Activated CD4-positive, alpha-beta memory T cell treated with anti-CD3 and anti-CD28 coated beads for 36 hours (primary cell): ENCODE measurements at regions of chr7 and their contacts with region 1.

Region 1: DNA sequence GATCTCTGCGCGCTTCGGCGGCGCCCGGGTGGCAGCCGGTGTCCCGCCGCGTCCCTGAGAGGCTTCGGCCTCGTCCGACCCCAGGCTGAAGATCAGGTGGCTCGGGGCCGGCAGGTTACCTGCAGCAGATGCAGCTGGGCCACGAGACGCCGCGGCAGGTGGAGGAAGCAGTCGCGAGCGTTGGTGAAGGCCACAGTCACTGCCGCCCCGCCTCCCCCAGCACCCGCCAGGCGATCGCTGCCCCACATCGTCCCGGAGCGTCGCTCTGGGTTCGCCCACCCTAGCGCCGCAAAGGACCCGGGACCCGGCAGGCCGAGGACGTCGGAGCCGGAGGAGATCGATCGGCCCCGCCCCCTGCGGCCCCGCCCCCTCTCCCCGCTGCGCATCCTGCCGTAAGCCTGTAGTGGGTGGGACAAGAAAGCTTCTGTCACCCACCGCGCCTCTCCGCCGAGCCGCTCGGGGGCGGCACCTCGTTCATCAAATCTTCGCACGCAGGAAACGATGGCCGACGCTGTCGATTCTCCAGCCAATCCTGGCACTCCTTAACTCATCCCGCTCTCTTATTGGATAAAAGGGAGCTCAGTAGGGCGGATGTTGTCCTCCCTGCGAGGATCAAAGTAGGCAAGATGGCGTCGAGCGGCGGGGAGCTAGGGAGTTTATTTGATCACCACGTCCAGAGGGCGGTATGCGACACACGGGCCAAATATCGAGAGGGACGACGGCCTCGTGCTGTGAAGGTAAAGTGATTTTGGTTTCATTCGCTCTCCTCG is at the starts of genes PEX1 and RBM48:
- DNase-seq: peak; percentile 98
- H3K4me3 Mint-ChIP-seq: peak within 1 kb of the TSS; percentile 90
- H3K27ac Mint-ChIP-seq: peak within 1 kb of the TSS; percentile 89
- H3K4me1 Mint-ChIP-seq: peaks cover 23% of the 10 kb centered on the region
- H3K27me3 Mint-ChIP-seq: peaks cover 2% of the 10 kb centered on the region
- total RNA-seq, gene PEX1: 16.9 to 17.0 TPM
- total RNA-seq, gene RBM48: 11.7 to 14.0 TPM

Region 2: GRCh38 chr7:92134271-92135051 is 393.9 kb before region 1 on chr7 and contains the start of gene CYP51A1:
- CTCF ChIA-PET with region 1: interaction called, 3 read pairs
- POLR2A ChIA-PET with region 1: no interaction called
- intact Hi-C with region 1: loop called (anchors 1 kb)
- DNase-seq: peak; percentile 95
- H3K4me3 Mint-ChIP-seq: peak within 1 kb of the TSS; percentile 99
- H3K27ac Mint-ChIP-seq: peak within 1 kb of the TSS; percentile 100
- H3K4me1 Mint-ChIP-seq: peaks cover 30% of the 10 kb centered on the region
- H3K27me3 Mint-ChIP-seq: peaks cover 2% of the 10 kb centered on the region
- total RNA-seq, gene CYP51A1: 72.3 to 74.7 TPM

Region 3: GRCh38 chr7:92584996-92585395 is 56.6 kb after region 1 on chr7:
- CTCF ChIA-PET with region 1: interaction called, 19 read pairs
- POLR2A ChIA-PET with region 1: interaction called, 9 read pairs
- intact Hi-C with region 1: loop called (anchors 1 kb)
- DNase-seq: no peak
- H3K4me3 Mint-ChIP-seq: no peak overlapping the region
- H3K27ac Mint-ChIP-seq: peak overlapping the region; percentile 76
- H3K4me1 Mint-ChIP-seq: peaks cover 58% of the 10 kb centered on the region
- H3K27me3 Mint-ChIP-seq: no peaks in the 10 kb centered on the region

Region 4: DNA sequence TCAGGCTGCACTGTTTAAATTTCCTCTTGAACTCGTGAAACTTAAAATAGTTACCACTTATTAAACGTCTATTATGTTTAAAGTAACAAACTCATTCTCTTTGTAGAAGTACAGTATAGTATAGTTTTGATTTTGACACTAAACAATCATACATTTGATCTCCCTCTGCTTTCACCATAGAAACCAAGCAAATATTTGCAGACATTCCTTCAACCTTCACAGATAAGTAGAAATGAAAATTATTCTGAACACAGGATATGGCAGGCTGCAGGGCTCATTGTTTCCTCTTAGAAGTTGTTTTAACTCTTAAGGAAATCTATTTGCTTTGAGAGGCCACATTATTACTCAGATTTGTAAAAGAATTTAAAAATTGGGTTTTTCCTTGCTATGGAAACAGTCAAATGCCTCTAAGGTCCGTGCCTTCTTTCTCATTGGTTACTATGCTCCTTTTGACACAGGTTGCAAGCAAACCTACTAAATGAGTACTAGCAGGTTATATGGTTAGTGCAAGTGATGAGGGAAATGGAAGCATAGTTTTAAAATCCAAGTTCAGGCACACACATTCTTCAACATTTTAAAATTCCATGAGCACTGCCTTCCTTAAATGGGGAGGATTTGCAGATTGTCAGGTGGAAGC is 154.6 kb after region 1 on chr7:
- CTCF ChIA-PET with region 1: no interaction called
- POLR2A ChIA-PET with region 1: no interaction called
- intact Hi-C with region 1: loop called (anchors 5 kb)
- DNase-seq: peak; percentile 20
- H3K4me3 Mint-ChIP-seq: no peak overlapping the region
- H3K27ac Mint-ChIP-seq: peak overlapping the region; percentile 87
- H3K4me1 Mint-ChIP-seq: peaks cover 85% of the 10 kb centered on the region
- H3K27me3 Mint-ChIP-seq: no peaks in the 10 kb centered on the region

Region 5: GRCh38 chr7:93055543-93056107 is 527.3 kb after region 1 on chr7:
- CTCF ChIA-PET with region 1: interaction called, 4 read pairs
- POLR2A ChIA-PET with region 1: no interaction called
- intact Hi-C with region 1: loop called (anchors 5 kb)
- DNase-seq: no peak
- H3K4me3 Mint-ChIP-seq: no peak overlapping the region
- H3K27ac Mint-ChIP-seq: no peak overlapping the region
- H3K4me1 Mint-ChIP-seq: peaks cover 17% of the 10 kb centered on the region
- H3K27me3 Mint-ChIP-seq: peaks cover 6% of the 10 kb centered on the region